Transverse colon (tissue), 4 donors: ENCODE measurements at regions of chr6 and their contacts with region 1.

Region 1: GRCh38 chr6:72406517-72406916 is 215.3 kb upstream of the KCNQ5 start:
- DNase-seq: no peak
- H3K4me3 ChIP-seq: no peak overlapping the region
- H3K27ac ChIP-seq: no peak overlapping the region
- H3K4me1 ChIP-seq: no peaks in the 10 kb centered on the region
- H3K27me3 ChIP-seq: no peaks in the 10 kb centered on the region
- CTCF ChIP-seq: no peak
- EP300 ChIP-seq: no peak
- POLR2A ChIP-seq: no peak

Region 2: GRCh38 chr6:72422171-72422570 is 15.7 kb after region 1 on chr6:
- in situ Hi-C with region 1: no loop called
- intact Hi-C with region 1: loop called (anchors 1 kb)
- DNase-seq: no peak
- H3K4me3 ChIP-seq: no peak overlapping the region
- H3K27ac ChIP-seq: no peak overlapping the region
- H3K4me1 ChIP-seq: no peaks in the 10 kb centered on the region
- H3K27me3 ChIP-seq: no peaks in the 10 kb centered on the region
- CTCF ChIP-seq: no peak
- EP300 ChIP-seq: no peak
- POLR2A ChIP-seq: no peak

Region 3: GRCh38 chr6:73329201-73329600 is 922.7 kb after region 1 on chr6:
- in situ Hi-C with region 1: loop called in 2 of 4 experiments (anchors 10 to 25 kb)
- intact Hi-C with region 1: no loop called
- DNase-seq: no peak
- H3K4me3 ChIP-seq: no peak overlapping the region
- H3K27ac ChIP-seq: no peak overlapping the region
- H3K4me1 ChIP-seq: no peaks in the 10 kb centered on the region
- H3K27me3 ChIP-seq: no peaks in the 10 kb centered on the region
- CTCF ChIP-seq: no peak
- EP300 ChIP-seq: no peak
- POLR2A ChIP-seq: no peak